HEK293 (cell line): ENCODE measurements at regions of chr1 and their contacts with region 1.

Region 1: DNA sequence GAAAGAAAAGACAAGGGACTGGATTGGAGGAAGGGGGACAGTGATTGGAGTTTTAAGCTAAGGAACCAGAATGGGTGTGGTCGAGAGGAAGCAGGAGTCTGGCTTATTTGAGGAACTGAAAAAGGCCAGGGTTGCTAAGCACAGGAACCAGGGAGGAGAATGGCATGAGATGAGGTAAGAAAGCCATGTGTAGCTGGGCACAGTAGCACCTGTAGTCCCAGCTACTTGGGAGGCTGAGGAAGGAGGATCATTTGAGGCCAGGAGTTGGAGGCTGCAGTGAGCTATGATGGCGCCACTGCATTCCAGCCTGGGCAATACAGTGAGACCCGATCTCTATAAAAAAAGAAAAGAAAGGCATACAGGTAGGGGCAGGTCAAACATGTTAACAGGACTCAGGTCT is 8.1 kb upstream of the KHDRBS1 start:
- H3K4me3 ChIP-seq: no peak overlapping the region
- H3K27ac ChIP-seq: no peak overlapping the region
- H3K4me1 ChIP-seq: no peaks in the 10 kb centered on the region
- CTCF ChIP-seq: no peak

Region 2: DNA sequence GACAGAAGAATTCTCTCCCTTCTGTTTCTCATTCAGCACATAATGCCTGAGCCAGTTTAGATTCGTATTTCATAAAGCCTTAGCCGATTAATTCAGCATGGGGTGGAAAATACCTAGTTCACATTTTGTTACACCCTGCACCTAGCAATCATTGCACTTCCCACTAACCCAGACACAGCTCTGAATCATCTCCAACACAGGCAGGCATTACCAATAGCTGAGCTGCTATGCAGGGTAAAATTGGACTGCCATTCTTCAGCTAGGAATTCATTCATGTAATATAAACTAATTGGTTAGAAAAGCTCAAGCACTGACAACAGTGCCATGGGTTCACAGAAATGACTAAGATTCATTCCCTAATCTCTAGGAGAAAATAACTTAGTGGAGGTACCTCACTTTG is 739.0 kb before region 1 on chr1:
- CTCF ChIA-PET with region 1: no interaction called
- POLR2A ChIA-PET with region 1: no interaction called
- H3K4me3 ChIP-seq: no peak overlapping the region
- H3K27ac ChIP-seq: no peak overlapping the region
- H3K4me1 ChIP-seq: no peaks in the 10 kb centered on the region
- CTCF ChIP-seq: no peak

Region 3: DNA sequence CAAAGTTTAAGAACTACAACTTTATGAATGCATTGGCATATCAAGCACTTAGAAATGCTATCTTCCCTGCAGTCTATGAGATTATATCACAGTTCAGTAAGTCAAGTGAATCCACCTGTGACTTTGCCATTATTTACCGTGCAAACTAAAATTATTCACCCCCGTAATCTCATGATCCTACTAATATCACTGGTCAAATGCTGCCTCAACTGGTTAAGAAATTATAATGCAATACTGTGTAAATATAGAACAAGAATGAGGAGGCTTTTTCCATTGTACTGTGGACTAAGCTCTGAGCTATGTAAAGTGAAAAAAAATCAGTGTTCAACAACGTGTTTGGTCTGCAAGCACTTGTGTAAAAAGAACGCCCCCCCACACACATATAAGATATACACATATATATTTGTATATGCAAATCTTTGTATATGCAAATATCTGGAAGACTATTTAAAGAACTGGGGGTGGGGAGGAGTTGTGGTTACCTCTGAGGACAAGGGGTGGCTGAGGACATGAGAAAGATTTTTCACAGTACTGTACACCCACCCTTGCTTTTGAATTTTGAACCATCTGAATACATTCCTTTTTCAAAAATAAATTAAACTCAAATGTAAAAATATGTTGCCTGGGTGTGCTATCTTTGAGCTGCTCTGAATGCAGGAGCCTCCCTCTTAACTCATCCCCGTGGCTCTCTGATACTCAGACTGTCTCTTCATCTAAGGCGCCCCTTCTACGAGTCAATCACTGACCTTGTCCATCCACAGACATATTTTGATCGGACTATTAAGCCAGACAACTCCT is 124.4 kb before region 1 on chr1:
- CTCF ChIA-PET with region 1: no interaction called
- POLR2A ChIA-PET with region 1: no interaction called
- H3K4me3 ChIP-seq: no peak overlapping the region
- H3K27ac ChIP-seq: no peak overlapping the region
- H3K4me1 ChIP-seq: no peaks in the 10 kb centered on the region
- CTCF ChIP-seq: no peak

Region 4: DNA sequence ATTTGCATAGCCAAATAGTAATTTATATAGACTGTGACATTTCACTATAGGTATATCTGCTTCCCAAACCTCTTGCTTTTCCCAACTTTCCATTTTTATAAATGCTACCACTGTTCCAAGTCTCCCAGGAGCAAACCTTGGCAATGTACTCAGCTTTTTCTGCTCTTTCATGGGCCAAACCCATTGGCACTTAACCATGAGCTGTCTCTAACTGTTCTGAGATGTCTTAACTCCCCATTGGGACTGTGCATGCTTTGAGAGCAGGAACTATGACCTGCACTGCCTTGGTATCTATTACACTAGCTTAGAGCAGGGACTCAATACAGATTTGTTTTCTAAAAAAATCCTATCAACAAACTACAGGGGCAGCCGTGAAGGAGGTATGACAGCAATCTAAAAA is 14.3 kb before region 1 on chr1:
- CTCF ChIA-PET with region 1: interaction called, 15 read pairs
- POLR2A ChIA-PET with region 1: no interaction called
- H3K4me3 ChIP-seq: no peak overlapping the region
- H3K27ac ChIP-seq: no peak overlapping the region
- H3K4me1 ChIP-seq: no peaks in the 10 kb centered on the region
- CTCF ChIP-seq: no peak

Region 5: GRCh38 chr1:32023351-32023750 is 17.8 kb after region 1 on chr1:
- CTCF ChIA-PET with region 1: no interaction called
- POLR2A ChIA-PET with region 1: no interaction called
- H3K4me3 ChIP-seq: no peak overlapping the region
- H3K27ac ChIP-seq: peak overlapping the region; percentile 62; the same call in 1 of the 2 replicates
- H3K4me1 ChIP-seq: peaks cover 14% of the 10 kb centered on the region; the same call in 1 of the 2 replicates
- CTCF ChIP-seq: no peak

Region 6: DNA sequence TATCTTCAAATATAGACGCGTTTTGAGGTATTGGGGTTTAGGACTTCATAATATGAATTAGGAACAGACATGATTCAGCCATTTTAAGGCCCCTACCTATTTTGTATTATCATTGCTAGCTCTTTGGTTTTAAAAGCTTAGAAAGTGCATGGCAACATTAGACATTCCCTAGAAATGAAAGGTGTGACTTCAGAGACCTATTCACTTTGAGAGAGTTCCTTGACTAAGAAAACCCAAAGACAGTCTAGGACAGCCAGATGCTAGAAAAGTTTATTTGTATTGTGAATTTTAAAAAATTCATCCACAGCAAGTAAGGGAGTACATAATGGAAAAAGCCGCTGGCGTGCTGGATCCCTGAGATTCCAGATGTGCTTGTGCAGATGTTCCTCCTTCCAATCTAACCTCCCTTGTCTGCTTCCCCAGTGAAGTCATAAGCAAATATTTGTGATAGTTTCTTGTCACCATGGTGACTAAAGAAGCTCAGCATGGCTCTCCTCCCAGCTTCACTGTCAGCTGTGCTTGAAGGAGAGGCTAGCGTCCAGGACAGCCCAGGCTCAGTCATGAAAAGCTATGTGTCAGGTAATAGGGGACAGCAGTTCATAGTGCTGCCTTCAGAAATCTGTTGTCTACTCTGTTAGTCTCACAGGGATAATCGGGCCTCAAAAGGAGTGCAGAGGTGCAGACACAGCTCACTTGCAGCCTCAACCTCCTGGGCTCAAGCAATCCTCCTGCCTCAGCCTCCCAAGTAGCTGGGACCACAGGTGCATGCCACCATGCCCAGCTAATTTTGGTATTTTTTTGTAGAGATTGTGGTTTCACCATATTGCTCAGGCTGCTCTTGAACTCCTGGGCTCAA is 137.2 kb after region 1 on chr1:
- CTCF ChIA-PET with region 1: no interaction called
- POLR2A ChIA-PET with region 1: no interaction called
- H3K4me3 ChIP-seq: no peak overlapping the region
- H3K27ac ChIP-seq: no peak overlapping the region
- H3K4me1 ChIP-seq: peaks cover 4% of the 10 kb centered on the region
- CTCF ChIP-seq: no peak